ENCODE measurements at regions of chr17 and their contacts with region 1.

Region 1: DNA sequence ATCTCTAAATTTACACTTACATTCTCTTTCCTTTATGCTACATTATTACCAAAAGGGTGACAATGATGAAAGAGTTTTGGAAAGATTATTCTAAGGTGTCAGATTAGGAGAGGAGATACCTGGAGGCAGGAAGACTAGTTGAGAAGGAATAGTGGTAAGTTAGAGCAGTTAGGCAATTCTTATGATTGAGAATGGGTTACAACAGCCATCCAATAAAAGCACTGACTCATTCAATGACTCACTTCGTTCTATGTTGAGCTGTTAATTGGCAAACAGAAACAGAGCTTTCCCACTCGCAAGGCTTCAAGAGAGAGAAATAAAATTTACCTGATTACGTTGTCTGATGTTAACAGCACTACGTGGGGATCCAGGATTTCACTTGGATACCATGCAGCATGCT is 5.8 kb downstream of the NUP88 start:
- DNase-seq: no peak

Region 2: DNA sequence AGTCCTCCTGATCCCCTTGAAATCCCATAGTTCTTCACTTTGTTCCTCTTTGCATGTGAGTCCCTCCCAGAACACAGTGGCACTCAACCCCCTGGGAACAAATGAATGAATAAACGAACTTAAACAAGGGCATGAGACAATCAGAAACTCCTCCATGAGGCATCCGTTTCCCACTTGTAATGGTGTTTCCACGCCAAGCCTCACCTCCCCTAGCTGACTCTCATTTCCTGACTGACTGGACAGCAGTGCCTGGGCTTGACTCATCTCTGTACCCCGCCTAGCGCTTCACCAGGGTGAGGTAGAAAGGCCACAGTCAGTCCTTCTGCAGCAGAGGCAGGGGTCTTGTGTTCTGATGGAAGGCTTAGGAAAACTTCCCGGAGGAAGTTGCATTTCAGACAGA is 401.8 kb before region 1 on chr17:
- in situ Hi-C with region 1: no loop called
- DNase-seq: no peak

Region 3: GRCh38 chr17:5364156-5364555 is 49.5 kb before region 1 on chr17:
- in situ Hi-C with region 1: loop called (anchors 5 kb)
- DNase-seq: no peak

Measured in G401 (cell line).